B cell (primary cell): ENCODE measurements at regions of chr6 and their contacts with region 1.

Region 1: GRCh38 chr6:89371849-89372505 is 19.5 kb upstream of the UBE2J1 start:
- DNase-seq: peak; percentile 90
- ATAC-seq: peak; percentile 88
- H3K4me3 ChIP-seq: no peak overlapping the region
- H3K4me3 Mint-ChIP-seq: peak overlapping the region; percentile 18
- H3K27ac ChIP-seq: peak overlapping the region; percentile 17 to 18
- H3K27ac Mint-ChIP-seq: peak overlapping the region; percentile 53
- H3K4me1 ChIP-seq: peaks cover 23 to 37% of the 10 kb centered on the region in 2 donors
- H3K4me1 Mint-ChIP-seq: peaks cover 39% of the 10 kb centered on the region
- H3K27me3 ChIP-seq: no peaks in the 10 kb centered on the region
- H3K27me3 Mint-ChIP-seq: no peaks in the 10 kb centered on the region
- CTCF ChIP-seq: peak; percentile 98

Region 2: GRCh38 chr6:88804701-88805100 is 567.3 kb before region 1 on chr6:
- CTCF ChIA-PET with region 1: no interaction called
- POLR2A ChIA-PET with region 1: no interaction called
- intact Hi-C with region 1: no loop called
- DNase-seq: no peak
- ATAC-seq: no peak
- H3K4me3 ChIP-seq: no peak overlapping the region
- H3K4me3 Mint-ChIP-seq: no peak overlapping the region
- H3K27ac ChIP-seq: no peak overlapping the region
- H3K27ac Mint-ChIP-seq: no peak overlapping the region
- H3K4me1 ChIP-seq: no peaks in the 10 kb centered on the region
- H3K4me1 Mint-ChIP-seq: no peaks in the 10 kb centered on the region
- H3K27me3 ChIP-seq: no peaks in the 10 kb centered on the region
- H3K27me3 Mint-ChIP-seq: no peaks in the 10 kb centered on the region
- CTCF ChIP-seq: no peak

Region 3: GRCh38 chr6:88982720-88983119 is 389.3 kb before region 1 on chr6:
- CTCF ChIA-PET with region 1: interaction called, 70 read pairs
- POLR2A ChIA-PET with region 1: no interaction called
- intact Hi-C with region 1: loop called (anchors 1 kb)
- DNase-seq: peak; percentile 73
- ATAC-seq: peak; percentile 63
- H3K4me3 ChIP-seq: no peak overlapping the region
- H3K4me3 Mint-ChIP-seq: no peak overlapping the region
- H3K27ac ChIP-seq: no peak overlapping the region
- H3K27ac Mint-ChIP-seq: no peak overlapping the region
- H3K4me1 ChIP-seq: no peaks in the 10 kb centered on the region
- H3K4me1 Mint-ChIP-seq: no peaks in the 10 kb centered on the region
- H3K27me3 ChIP-seq: no peaks in the 10 kb centered on the region
- H3K27me3 Mint-ChIP-seq: no peaks in the 10 kb centered on the region
- CTCF ChIP-seq: peak; percentile 88

Region 4: DNA sequence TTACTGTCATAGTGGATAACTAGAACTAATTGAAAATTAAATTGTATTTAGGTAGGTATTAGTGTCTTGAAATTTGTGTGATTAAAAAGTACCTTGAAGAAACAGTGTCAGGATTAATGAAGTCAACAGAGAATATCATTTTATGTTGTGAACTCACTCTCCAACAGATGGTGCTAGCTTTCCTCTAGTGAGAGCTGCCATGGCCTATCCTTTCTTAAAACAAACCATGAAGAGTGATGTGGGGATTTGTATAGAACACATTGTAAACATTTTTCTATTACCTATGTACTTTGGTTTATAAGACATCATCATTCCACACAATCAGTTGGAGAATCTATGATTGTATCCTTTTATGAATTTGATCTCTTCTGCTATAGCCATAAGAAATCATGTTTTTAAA is 249.4 kb before region 1 on chr6:
- CTCF ChIA-PET with region 1: interaction called, 3 read pairs
- POLR2A ChIA-PET with region 1: no interaction called
- intact Hi-C with region 1: loop called (anchors 2 kb)
- DNase-seq: peak; percentile 33
- ATAC-seq: no peak
- H3K4me3 ChIP-seq: no peak overlapping the region
- H3K4me3 Mint-ChIP-seq: no peak overlapping the region
- H3K27ac ChIP-seq: no peak overlapping the region
- H3K27ac Mint-ChIP-seq: no peak overlapping the region
- H3K4me1 ChIP-seq: peaks cover 0 to 4% of the 10 kb centered on the region in 2 donors
- H3K4me1 Mint-ChIP-seq: peaks cover 2% of the 10 kb centered on the region
- H3K27me3 ChIP-seq: peaks cover 0 to 4% (median 0%) of the 10 kb centered on the region in 4 experiments
- H3K27me3 Mint-ChIP-seq: peaks cover 6% of the 10 kb centered on the region
- CTCF ChIP-seq: peak; percentile 55

Region 5: DNA sequence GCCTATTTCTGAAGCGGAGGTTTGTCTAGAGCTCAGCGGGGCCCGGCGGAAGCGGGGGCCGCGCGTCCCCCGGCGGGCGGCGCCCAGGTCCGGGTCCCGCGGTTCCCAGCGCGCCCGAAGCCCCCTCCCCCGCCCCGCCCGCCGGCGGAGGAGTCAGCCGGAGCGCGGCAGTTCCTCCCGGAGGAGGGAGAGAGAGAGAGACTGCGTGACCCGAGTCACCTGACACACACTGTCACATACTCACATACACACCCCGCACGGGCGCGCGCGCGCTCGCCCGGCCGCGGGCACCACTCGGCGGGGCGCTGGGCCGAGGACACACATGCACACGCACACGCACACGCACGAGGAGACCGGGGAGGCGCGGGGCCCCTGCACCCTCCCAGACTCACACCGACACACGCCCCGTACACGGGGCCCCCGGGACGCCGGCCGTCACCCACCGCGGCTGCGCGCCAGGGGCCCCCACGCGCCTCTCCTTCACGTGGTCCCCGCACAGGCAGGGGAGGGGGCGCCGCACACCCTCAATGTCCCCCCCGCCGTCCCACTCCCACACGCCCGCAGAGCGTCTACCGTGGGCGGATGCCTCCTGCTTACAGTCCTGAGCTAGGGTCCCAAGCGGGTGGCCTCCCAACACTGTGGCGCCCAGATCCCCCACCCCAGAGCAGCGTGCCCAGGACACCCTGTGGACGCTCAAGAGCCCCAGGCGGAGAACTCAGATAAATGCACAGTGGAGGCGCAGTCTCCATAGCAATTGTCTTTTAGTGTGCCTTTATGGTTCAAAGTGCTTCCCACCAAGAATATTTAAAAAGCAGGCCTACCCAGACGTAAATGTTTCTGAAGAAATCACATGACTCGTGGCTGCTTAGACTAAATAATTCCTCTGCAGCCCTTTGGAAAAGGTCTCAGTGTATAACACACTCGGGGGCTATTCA is 40.4 kb after region 1 on chr6 and contains the start of gene RRAGD:
- CTCF ChIA-PET with region 1: interaction called, 30 read pairs
- POLR2A ChIA-PET with region 1: no interaction called
- intact Hi-C with region 1: loop called (anchors 2 kb)
- DNase-seq: peak; percentile 81
- ATAC-seq: peak; percentile 69
- H3K4me3 ChIP-seq: peak within 1 kb of the TSS; percentile 44 to 81 (median 66)
- H3K4me3 Mint-ChIP-seq: peak within 1 kb of the TSS; percentile 96
- H3K27ac ChIP-seq: peak within 1 kb of the TSS in 1 of 2 donors; percentile 13
- H3K27ac Mint-ChIP-seq: peak within 1 kb of the TSS; percentile 80
- H3K4me1 ChIP-seq: peaks cover 16 to 19% of the 10 kb centered on the region in 2 donors
- H3K4me1 Mint-ChIP-seq: peaks cover 19% of the 10 kb centered on the region
- H3K27me3 ChIP-seq: peaks cover 0 to 34% (median 17%) of the 10 kb centered on the region in 4 experiments
- H3K27me3 Mint-ChIP-seq: peaks cover 25% of the 10 kb centered on the region
- CTCF ChIP-seq: no peak
- total RNA-seq, gene RRAGD: 2.7 and 4.5 TPM in 2 replicates

Region 6: DNA sequence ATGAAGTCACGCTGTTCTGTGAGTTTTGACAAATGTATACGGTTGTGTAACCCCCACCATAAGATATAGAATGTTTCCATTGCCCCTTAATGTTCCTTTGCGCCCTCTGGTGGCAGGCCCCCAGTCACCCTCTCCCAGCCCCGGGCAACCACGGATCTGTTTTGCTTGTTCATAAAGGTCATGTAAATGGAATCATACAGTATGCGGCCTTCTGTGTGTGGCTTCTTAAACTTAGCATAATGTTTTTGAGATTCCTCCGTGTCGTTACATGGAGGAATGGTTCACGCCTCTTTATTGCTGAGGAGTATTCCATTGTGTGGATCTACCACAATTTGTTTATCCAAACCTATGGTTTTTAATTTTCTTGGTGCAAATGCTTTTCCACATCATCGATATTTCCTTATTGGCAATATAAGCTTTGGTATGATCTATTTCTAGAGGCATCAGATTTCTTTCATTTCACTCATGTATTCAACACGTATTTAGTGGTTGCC is 238.2 kb after region 1 on chr6:
- CTCF ChIA-PET with region 1: interaction called, 51 read pairs
- POLR2A ChIA-PET with region 1: no interaction called
- intact Hi-C with region 1: loop called (anchors 1 kb)
- DNase-seq: peak; percentile 80
- ATAC-seq: peak; percentile 91
- H3K4me3 ChIP-seq: no peak overlapping the region
- H3K4me3 Mint-ChIP-seq: no peak overlapping the region
- H3K27ac ChIP-seq: no peak overlapping the region
- H3K27ac Mint-ChIP-seq: no peak overlapping the region
- H3K4me1 ChIP-seq: no peaks in the 10 kb centered on the region
- H3K4me1 Mint-ChIP-seq: no peaks in the 10 kb centered on the region
- H3K27me3 ChIP-seq: no peaks in the 10 kb centered on the region
- H3K27me3 Mint-ChIP-seq: no peaks in the 10 kb centered on the region
- CTCF ChIP-seq: peak; percentile 91